Caco-2 (cell line): ENCODE measurements at regions of chr2 and their contacts with region 1.

Region 1: DNA sequence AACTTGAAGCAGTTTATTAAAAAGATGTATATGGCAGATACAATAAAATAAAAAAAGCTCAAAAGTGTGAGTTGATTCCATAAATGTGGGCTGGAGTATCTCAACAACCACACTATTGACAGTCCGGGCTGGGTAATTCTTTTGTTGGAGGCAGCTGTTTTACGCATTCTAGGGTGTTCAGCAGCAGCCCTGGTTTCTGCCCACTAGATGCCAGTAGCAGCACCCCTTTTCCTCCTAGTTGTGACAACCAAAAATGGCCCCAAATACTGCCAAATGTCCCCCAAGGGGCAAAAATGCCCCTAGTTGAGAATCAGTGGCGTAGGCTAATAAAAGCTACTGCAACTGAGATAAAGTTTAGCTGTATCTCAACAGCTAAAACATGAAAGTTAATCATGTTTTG is 44.8 kb downstream of the CHMP3 start:
- DNase-seq: peak in 1 of 2 experiments; percentile 36
- H3K4me3 ChIP-seq: no peak overlapping the region
- H3K4me3 Mint-ChIP-seq: no peak overlapping the region
- H3K27ac Mint-ChIP-seq: no peak overlapping the region
- H3K4me1 ChIP-seq: no peaks in the 10 kb centered on the region
- H3K4me1 Mint-ChIP-seq: no peaks in the 10 kb centered on the region
- H3K27me3 ChIP-seq: no peaks in the 10 kb centered on the region
- H3K27me3 Mint-ChIP-seq: no peaks in the 10 kb centered on the region
- CTCF ChIP-seq: peak; percentile 36 to 45

Region 2: DNA sequence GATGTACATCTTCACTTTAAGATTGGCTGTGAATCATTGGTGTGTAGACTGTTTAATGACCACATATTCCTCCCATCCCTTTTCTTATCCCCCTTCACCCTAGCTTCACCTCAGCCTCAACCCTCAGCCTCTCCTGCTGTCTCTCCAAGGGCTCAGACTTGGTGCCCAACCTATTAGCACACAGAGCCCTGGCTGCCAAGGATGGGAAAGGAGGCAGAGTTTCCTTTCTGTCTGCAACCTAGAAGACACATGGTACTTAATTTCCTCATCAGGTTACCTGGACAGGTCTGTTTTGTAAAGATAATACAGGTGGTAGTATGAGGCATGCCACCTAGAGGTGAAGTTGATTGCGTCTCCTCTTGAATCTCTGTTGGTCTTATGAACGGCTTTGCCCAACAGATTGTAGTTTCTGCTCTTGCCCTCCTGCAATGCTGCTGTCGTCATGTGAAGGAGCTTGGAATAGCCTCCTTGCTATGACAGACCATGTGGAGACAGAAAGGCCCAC is 157.1 kb after region 1 on chr2:
- CTCF ChIA-PET with region 1: no interaction called
- POLR2A ChIA-PET with region 1: no interaction called
- intact Hi-C with region 1: loop called (anchors 10 kb)
- DNase-seq: peak; percentile 42 to 44
- H3K4me3 ChIP-seq: no peak overlapping the region
- H3K4me3 Mint-ChIP-seq: no peak overlapping the region
- H3K27ac Mint-ChIP-seq: no peak overlapping the region
- H3K4me1 ChIP-seq: peaks cover 19% of the 10 kb centered on the region
- H3K4me1 Mint-ChIP-seq: peaks cover 19% of the 10 kb centered on the region
- H3K27me3 ChIP-seq: no peaks in the 10 kb centered on the region
- H3K27me3 Mint-ChIP-seq: no peaks in the 10 kb centered on the region
- CTCF ChIP-seq: peak; percentile 42 to 65

Region 3: GRCh38 chr2:86764661-86765307 is 246.3 kb after region 1 on chr2:
- CTCF ChIA-PET with region 1: no interaction called
- POLR2A ChIA-PET with region 1: no interaction called
- intact Hi-C with region 1: loop called (anchors 10 kb)
- DNase-seq: peak in 1 of 2 experiments; percentile 68
- H3K4me3 ChIP-seq: no peak overlapping the region
- H3K4me3 Mint-ChIP-seq: no peak overlapping the region
- H3K27ac Mint-ChIP-seq: no peak overlapping the region
- H3K4me1 ChIP-seq: no peaks in the 10 kb centered on the region
- H3K4me1 Mint-ChIP-seq: no peaks in the 10 kb centered on the region
- H3K27me3 ChIP-seq: no peaks in the 10 kb centered on the region
- H3K27me3 Mint-ChIP-seq: no peaks in the 10 kb centered on the region
- CTCF ChIP-seq: peak; percentile 69 to 86